Breast epithelium (tissue), 4 donors: ENCODE measurements at regions of chr11 and their contacts with region 1.

Region 1: GRCh38 chr11:6438979-6439571 is 1.7 kb downstream of the HPX start:
- DNase-seq: no peak
- H3K4me3 ChIP-seq: no peak overlapping the region
- H3K27ac ChIP-seq: no peak overlapping the region
- H3K4me1 ChIP-seq: no peaks in the 10 kb centered on the region
- H3K27me3 ChIP-seq: no peaks in the 10 kb centered on the region
- CTCF ChIP-seq: peak in 2 of 3 donors; percentile 42 to 62
- POLR2A ChIP-seq: no peak

Region 2: DNA sequence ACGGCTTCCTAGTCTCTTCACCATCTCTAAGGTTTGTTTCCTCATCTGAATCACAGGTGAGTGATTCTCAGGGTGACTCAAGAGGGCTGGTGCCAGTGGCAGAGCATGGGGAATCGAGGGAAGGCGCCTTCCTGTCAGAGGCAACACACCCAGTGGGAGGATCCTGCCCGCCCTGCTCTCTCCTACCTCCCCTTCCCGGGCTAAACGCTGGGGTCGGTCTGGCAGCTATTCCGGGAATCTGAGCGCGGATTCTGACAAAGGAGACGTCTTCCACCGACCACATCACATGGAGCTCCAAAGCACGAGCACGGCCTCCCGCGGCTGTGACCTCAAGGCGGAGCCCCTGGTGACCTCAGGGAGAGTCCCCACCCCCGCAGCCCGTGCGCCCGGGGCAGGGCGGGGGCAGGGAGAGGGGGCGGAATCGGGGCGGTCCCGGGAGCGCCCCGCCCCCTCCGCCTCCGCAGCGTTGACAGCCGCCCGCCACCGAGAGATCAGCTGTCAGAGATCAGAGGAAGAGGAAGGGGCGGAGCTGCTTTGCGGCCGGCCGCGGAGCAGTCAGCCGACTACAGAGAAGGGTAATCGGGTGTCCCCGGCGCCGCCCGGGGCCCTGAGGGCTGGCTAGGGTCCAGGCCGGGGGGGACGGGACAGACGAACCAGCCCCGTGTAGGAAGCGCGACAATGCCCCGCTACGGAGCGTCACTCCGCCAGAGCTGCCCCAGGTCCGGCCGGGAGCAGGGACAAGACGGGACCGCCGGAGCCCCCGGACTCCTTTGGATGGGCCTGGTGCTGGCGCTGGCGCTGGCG is 49.0 kb before region 1 on chr11 and contains the start of gene SMPD1:
- intact Hi-C with region 1: loop called (anchors 10 kb)
- DNase-seq: peak; percentile 89 to 90
- H3K4me3 ChIP-seq: peak within 1 kb of the TSS; percentile 67 to 86 (median 76)
- H3K27ac ChIP-seq: peak within 1 kb of the TSS; percentile 95 to 96
- H3K4me1 ChIP-seq: peaks cover 0 to 10% of the 10 kb centered on the region in 2 donors
- H3K27me3 ChIP-seq: no peaks in the 10 kb centered on the region
- CTCF ChIP-seq: no peak
- POLR2A ChIP-seq: peak; percentile 10
- total RNA-seq, gene SMPD1: 15.7 to 30.4 (median 17.3) TPM

Region 3: GRCh38 chr11:6452219-6452618 is 13.1 kb after region 1 on chr11:
- intact Hi-C with region 1: no loop called
- DNase-seq: no peak
- H3K4me3 ChIP-seq: no peak overlapping the region
- H3K27ac ChIP-seq: no peak overlapping the region
- H3K4me1 ChIP-seq: no peaks in the 10 kb centered on the region
- H3K27me3 ChIP-seq: no peaks in the 10 kb centered on the region
- CTCF ChIP-seq: no peak
- POLR2A ChIP-seq: no peak

Region 4: GRCh38 chr11:6497069-6497839 is 58.2 kb after region 1 on chr11 and contains the start of gene DNHD1:
- intact Hi-C with region 1: no loop called
- DNase-seq: no peak
- H3K4me3 ChIP-seq: no peak within 1 kb of the TSS
- H3K27ac ChIP-seq: no peak within 1 kb of the TSS
- H3K4me1 ChIP-seq: no peaks in the 10 kb centered on the region
- H3K27me3 ChIP-seq: no peaks in the 10 kb centered on the region
- CTCF ChIP-seq: no peak
- POLR2A ChIP-seq: no peak
- total RNA-seq, gene DNHD1: 12.3 to 21.6 (median 14.9) TPM